Activated naive CD8-positive, alpha-beta T cell treated with anti-CD3 and anti-CD28 coated beads, Interleukin-2, amount 10 ng/mL, durations not matched to agents 7 days and 5 days (primary cell): ENCODE measurements at regions of chr5 and their contacts with region 1.

Region 1: GRCh38 chr5:134113902-134114875 is at the start of gene TCF7:
- DNase-seq: peak; percentile 84
- ATAC-seq: peak; percentile 64
- H3K4me3 Mint-ChIP-seq: peak within 1 kb of the TSS; percentile 87
- H3K27ac Mint-ChIP-seq: peak within 1 kb of the TSS; percentile 93
- H3K4me1 Mint-ChIP-seq: peaks cover 56% of the 10 kb centered on the region
- H3K27me3 Mint-ChIP-seq: no peaks in the 10 kb centered on the region
- total RNA-seq, gene TCF7: 283 to 315 TPM

Region 2: GRCh38 chr5:134053840-134054338 is 60.3 kb before region 1 on chr5:
- POLR2A ChIA-PET with region 1: interaction called, 10 read pairs
- DNase-seq: no peak
- ATAC-seq: peak; percentile 86
- H3K4me3 Mint-ChIP-seq: peak overlapping the region; percentile 57
- H3K27ac Mint-ChIP-seq: peak overlapping the region; percentile 87
- H3K4me1 Mint-ChIP-seq: peaks cover 25% of the 10 kb centered on the region
- H3K27me3 Mint-ChIP-seq: no peaks in the 10 kb centered on the region

Region 3: DNA sequence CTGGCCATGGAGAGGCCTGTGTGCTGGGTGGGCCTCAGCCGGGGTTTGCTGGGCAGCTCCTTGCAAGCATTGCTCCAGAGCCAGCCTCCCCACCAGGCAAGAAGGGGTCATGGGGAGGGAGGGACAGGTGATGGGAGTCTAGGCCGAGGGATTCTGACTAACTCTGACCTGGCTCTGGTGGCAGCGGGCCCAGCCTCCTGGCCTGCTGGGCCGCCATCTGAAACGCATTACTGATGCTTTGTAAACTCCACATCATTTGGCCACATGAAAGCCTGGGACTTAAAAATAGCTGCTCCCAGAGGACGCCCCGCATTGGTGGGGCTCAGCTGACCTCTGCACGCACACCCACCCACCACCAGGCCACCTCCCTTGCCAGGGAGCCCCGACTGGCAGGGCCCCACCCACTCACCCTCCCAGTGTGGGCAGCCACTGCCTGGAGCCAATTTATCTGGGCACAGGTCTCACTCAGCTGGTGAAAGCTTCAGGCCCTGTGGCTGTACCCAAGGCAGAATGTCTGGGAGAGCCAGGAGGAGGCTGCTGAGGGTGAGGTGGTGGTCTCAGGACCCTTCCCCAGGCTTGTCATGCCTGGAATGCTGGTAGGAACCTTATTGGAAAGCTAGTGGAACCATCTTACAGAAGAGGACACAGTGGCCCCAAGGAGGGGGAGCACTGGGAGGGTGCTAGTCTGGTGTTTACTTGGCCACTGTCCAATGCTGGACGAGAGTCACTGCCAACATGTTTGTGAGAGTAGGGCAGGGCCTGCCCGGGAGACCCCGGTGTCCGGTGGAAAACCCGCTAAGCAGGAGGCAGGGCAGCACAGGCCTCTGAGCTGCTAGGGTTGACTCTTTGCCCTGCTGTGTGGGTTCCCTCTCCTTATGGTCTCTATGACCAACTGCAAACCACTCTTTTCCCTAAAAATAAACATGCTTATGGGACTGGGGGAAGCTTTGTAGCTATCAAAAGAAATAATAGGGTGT is 11.1 kb after region 1 on chr5:
- POLR2A ChIA-PET with region 1: interaction called, 174 read pairs
- DNase-seq: peak; percentile 43
- ATAC-seq: no peak
- H3K4me3 Mint-ChIP-seq: peak overlapping the region; percentile 46
- H3K27ac Mint-ChIP-seq: peak overlapping the region; percentile 74
- H3K4me1 Mint-ChIP-seq: peaks cover 84% of the 10 kb centered on the region
- H3K27me3 Mint-ChIP-seq: no peaks in the 10 kb centered on the region

Region 4: GRCh38 chr5:134132372-134133034 is 18.3 kb after region 1 on chr5:
- POLR2A ChIA-PET with region 1: interaction called, 174 read pairs
- DNase-seq: peak; percentile 74
- ATAC-seq: peak; percentile 64
- H3K4me3 Mint-ChIP-seq: peak overlapping the region; percentile 67
- H3K27ac Mint-ChIP-seq: peak overlapping the region; percentile 83
- H3K4me1 Mint-ChIP-seq: peaks cover 89% of the 10 kb centered on the region
- H3K27me3 Mint-ChIP-seq: no peaks in the 10 kb centered on the region

Region 5: DNA sequence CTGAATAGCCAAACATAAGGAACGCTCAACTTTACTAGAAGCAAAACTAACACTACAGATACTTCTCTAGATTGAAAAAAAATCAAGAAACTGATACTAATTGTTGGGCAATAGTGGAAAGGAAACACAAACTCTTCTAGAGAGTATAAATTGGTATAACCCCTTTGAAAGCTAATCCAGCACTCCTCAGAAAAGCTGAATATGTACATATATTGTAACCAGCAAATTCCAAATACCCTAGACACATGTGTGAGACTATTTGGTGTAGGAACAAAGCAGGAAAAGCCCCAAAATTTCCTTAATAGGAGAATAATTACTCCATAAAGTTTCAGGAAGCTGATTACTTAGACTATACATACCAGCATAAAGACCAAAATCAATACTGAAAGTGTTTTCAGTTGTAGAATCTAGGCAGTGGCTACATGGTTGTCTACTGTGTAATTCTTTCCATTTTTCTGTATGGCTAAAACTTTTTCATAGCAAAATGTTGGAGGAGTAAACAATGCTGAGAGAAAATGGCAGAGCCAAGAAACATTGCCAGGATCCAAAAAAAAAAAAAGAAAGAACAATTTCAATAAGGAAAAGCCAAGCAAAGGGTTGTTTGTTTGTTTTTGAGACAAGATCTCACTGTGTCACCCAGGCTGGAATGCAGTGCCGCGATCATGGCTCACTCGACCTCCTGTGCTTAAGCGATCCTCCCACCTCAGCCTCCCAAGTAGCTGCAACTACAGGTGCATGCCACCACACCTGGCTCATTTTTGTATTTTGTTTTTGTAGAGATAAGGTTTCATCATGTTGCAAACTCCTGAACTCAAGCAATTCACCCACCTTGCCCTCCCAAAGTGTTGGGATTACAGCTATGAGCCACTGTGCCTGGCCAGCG is 47.6 kb after region 1 on chr5:
- POLR2A ChIA-PET with region 1: no interaction called
- DNase-seq: no peak
- ATAC-seq: no peak
- H3K4me3 Mint-ChIP-seq: no peak overlapping the region
- H3K27ac Mint-ChIP-seq: no peak overlapping the region
- H3K4me1 Mint-ChIP-seq: peaks cover 5% of the 10 kb centered on the region
- H3K27me3 Mint-ChIP-seq: no peaks in the 10 kb centered on the region

Region 6: DNA sequence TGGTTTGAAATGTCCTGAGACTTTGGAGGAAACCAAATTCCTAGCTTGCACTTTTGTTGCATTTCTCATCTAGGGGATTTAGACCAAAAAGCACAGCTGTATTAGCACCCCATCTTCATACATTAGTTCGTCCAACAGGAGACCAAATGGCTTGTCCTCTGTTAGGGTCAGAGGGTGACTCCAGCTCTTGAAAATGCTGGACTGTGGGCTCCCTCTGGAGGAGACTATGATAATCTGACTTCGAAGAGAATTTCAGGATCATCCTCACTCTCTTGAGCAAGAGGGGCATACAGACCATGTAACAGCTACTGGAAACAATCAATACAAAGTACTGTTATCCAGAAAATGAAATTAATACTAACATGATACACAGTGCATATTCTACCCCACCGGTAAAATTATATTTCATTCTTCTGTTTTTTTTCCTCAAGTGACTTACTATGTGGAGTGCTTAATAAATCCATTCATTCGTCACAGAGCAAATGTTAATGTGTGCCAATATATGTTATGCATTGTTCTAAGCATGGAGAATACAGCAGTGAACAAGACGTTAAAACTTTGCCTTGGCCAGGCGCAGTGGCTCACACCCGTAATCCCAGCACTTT is 175.4 kb after region 1 on chr5:
- POLR2A ChIA-PET with region 1: no interaction called
- DNase-seq: no peak
- ATAC-seq: peak; percentile 73
- H3K4me3 Mint-ChIP-seq: no peak overlapping the region
- H3K27ac Mint-ChIP-seq: no peak overlapping the region
- H3K4me1 Mint-ChIP-seq: peaks cover 3% of the 10 kb centered on the region
- H3K27me3 Mint-ChIP-seq: peaks cover 17% of the 10 kb centered on the region